Activated CD8-positive, alpha-beta T cell treated with anti-CD3 and anti-CD28 coated beads for 36 hours (primary cell): ENCODE measurements at regions of chr11 and their contacts with region 1.

Region 1: DNA sequence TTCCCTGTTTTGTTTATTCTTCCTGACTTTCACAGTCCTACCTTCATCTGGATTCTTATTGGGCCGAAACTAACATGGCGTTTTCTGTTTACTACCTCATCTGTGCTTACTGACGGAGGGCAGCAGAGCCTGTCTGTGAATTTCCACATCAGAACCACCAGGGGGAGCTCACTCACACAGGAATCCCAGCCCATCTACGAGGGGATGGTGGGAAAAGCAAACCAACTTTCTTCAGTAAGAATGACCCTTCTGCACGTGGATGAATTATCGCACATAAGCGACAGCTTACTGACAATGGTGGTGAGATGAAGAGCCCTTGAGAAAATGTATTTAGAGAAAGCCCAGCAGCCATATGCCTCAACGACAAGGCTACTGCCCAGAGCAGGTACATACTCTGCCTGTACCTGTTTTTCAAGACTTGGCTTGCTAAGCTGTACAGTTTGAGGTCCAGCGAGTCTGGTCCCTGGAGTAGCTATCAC is 42.5 kb downstream of the LARGE2 start:
- DNase-seq: peak; percentile 66
- ATAC-seq: peak; percentile 95
- H3K4me3 Mint-ChIP-seq: no peak overlapping the region
- H3K27ac Mint-ChIP-seq: no peak overlapping the region
- H3K4me1 Mint-ChIP-seq: no peaks in the 10 kb centered on the region
- H3K27me3 Mint-ChIP-seq: no peaks in the 10 kb centered on the region
- CTCF ChIP-seq: peak; percentile 97

Region 2: GRCh38 chr11:45949992-45950407 is 14.9 kb before region 1 on chr11:
- CTCF ChIA-PET with region 1: interaction called, 51 read pairs
- POLR2A ChIA-PET with region 1: no interaction called
- intact Hi-C with region 1: no loop called
- DNase-seq: no peak
- ATAC-seq: no peak
- H3K4me3 Mint-ChIP-seq: no peak overlapping the region
- H3K27ac Mint-ChIP-seq: no peak overlapping the region
- H3K4me1 Mint-ChIP-seq: no peaks in the 10 kb centered on the region
- H3K27me3 Mint-ChIP-seq: no peaks in the 10 kb centered on the region
- CTCF ChIP-seq: no peak

Region 3: GRCh38 chr11:46006418-46007070 is 41.6 kb after region 1 on chr11:
- CTCF ChIA-PET with region 1: interaction called, 89 read pairs
- POLR2A ChIA-PET with region 1: no interaction called
- intact Hi-C with region 1: loop called (anchors 1 kb)
- DNase-seq: peak; percentile 13
- ATAC-seq: peak; percentile 62
- H3K4me3 Mint-ChIP-seq: no peak overlapping the region
- H3K27ac Mint-ChIP-seq: no peak overlapping the region
- H3K4me1 Mint-ChIP-seq: peaks cover 2% of the 10 kb centered on the region
- H3K27me3 Mint-ChIP-seq: no peaks in the 10 kb centered on the region
- CTCF ChIP-seq: peak; percentile 86

Region 4: DNA sequence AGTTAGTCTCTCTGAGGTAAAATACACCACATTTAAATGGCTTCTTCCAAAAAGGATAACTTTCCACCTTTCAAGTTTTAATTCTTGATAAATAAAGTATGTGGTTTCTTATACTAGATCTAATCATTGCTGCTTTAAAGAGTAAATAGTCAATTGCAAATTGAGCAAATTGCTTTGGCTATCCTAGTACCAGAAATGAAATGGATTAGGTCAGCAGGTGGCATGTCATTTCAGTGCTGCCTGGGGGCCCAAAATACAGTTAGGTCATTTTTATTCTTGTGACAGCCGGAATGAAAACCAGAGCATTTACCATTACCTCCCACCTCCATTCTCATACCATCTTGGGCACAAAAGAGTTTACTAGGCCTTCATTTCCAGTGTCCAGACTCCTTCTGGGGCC is 86.2 kb after region 1 on chr11:
- CTCF ChIA-PET with region 1: interaction called, 10 read pairs
- POLR2A ChIA-PET with region 1: no interaction called
- intact Hi-C with region 1: no loop called
- DNase-seq: no peak
- ATAC-seq: no peak
- H3K4me3 Mint-ChIP-seq: no peak overlapping the region
- H3K27ac Mint-ChIP-seq: no peak overlapping the region
- H3K4me1 Mint-ChIP-seq: peaks cover 8% of the 10 kb centered on the region
- H3K27me3 Mint-ChIP-seq: no peaks in the 10 kb centered on the region
- CTCF ChIP-seq: no peak

Region 5: DNA sequence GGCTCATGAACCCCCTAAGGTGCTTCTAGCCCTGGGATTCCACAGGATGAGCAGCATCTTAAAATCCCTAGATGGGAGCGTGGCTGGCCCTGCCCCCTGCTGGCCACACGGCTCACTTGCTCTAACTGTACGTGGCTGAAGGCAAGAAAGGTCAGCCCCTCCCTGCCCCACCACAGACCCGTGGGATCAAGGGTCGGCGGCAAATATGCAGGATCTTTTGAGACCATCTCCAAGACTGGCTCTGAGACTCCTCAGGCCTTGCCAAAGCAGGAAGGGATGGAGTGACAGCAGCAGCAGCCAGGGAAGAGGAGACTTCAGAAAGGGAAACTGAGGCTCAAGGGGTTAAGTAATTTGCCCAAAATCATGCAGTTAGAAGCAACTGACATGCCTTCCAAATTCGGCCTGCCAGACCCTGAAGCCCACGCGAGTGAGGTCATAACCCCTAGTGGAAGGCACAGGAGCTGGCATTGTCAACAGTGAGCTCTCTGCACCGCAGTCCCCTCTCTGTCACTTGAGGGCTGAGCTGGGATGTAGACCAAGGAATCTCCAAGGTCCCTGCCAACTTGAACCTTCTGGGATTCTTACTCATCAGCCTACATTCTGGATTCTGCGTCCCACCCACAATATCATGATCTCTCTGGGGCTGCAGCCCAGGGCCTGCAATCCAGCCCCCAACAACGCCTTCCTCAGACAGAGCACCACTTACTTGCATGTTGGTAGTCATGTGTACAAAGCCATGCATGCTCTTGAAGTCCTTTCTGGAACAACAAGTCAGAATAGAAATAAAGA is 343.9 kb after region 1 on chr11:
- CTCF ChIA-PET with region 1: interaction called, 18 read pairs
- POLR2A ChIA-PET with region 1: no interaction called
- intact Hi-C with region 1: loop called (anchors 10 kb)
- DNase-seq: peak; percentile 88
- ATAC-seq: peak; percentile 88
- H3K4me3 Mint-ChIP-seq: no peak overlapping the region
- H3K27ac Mint-ChIP-seq: no peak overlapping the region
- H3K4me1 Mint-ChIP-seq: peaks cover 5% of the 10 kb centered on the region
- H3K27me3 Mint-ChIP-seq: no peaks in the 10 kb centered on the region
- CTCF ChIP-seq: peak; percentile 92